ENCODE measurements at regions of chr2 and their contacts with region 1.

Region 1: GRCh38 chr2:176638167-176639015 is 369.1 kb downstream of the MTX2 start:
- DNase-seq: peak; percentile 15
- ATAC-seq: peak; percentile 97
- H3K4me3 ChIP-seq: peak overlapping the region; percentile 39 to 68 (median 50)
- H3K27ac ChIP-seq: no peak overlapping the region
- H3K4me1 ChIP-seq: peaks cover 11% of the 10 kb centered on the region; the same call in 1 of the 2 replicates
- H3K27me3 ChIP-seq: peaks cover 6 to 59% of the 10 kb centered on the region in 2 experiments
- CTCF ChIP-seq: peak; percentile 75
- EP300 ChIP-seq: no peak
- POLR2A ChIP-seq: no peak
- RAD21 ChIP-seq: peak; percentile 84

Region 2: DNA sequence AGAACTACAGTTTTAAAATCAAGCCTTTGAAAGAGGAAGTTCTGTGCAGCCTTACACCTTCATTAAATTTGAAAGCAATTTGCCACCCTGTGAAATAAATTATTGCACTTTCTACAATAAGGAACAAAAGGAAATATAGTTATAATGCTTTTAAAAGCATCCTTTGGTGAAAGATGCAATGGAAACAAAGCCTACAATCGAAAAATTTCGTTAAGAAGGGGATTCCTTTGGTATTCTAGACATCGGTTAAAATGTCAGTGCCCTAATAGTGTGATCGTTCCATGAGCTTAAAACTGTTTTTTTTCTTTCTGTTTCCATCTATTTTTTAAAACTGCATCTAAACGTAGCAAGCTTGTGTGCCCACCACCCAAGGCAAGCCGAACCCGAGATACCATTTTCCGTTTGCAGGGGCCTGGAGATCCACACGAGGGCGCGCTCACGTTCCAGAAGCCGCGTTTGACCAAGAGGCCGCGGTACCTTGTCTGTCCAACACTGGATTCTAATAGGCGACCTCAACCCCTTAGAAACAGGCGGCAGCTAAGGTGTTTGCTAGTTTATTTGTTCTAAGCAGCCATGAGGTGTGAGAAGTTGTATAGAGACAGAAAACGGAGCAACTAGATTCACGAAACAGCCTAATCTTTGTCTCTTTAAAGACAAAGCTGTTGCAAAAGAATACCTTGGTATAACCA is 527.3 kb before region 1 on chr2:
- CTCF ChIA-PET with region 1: no interaction called
- POLR2A ChIA-PET with region 1: no interaction called
- in situ Hi-C with region 1: no loop called
- intact Hi-C with region 1: loop called (anchors 5 kb)
- DNase-seq: peak; percentile 50
- ATAC-seq: peak; percentile 62
- H3K4me3 ChIP-seq: no peak overlapping the region
- H3K27ac ChIP-seq: no peak overlapping the region
- H3K4me1 ChIP-seq: peaks cover 14% of the 10 kb centered on the region
- H3K27me3 ChIP-seq: peaks cover 16 to 88% of the 10 kb centered on the region in 2 experiments; a peak in 4 of 5 replicates
- CTCF ChIP-seq: peak; percentile 87
- EP300 ChIP-seq: no peak
- POLR2A ChIP-seq: no peak
- RAD21 ChIP-seq: peak; percentile 32; the same call in 1 of the 2 replicates

Region 3: DNA sequence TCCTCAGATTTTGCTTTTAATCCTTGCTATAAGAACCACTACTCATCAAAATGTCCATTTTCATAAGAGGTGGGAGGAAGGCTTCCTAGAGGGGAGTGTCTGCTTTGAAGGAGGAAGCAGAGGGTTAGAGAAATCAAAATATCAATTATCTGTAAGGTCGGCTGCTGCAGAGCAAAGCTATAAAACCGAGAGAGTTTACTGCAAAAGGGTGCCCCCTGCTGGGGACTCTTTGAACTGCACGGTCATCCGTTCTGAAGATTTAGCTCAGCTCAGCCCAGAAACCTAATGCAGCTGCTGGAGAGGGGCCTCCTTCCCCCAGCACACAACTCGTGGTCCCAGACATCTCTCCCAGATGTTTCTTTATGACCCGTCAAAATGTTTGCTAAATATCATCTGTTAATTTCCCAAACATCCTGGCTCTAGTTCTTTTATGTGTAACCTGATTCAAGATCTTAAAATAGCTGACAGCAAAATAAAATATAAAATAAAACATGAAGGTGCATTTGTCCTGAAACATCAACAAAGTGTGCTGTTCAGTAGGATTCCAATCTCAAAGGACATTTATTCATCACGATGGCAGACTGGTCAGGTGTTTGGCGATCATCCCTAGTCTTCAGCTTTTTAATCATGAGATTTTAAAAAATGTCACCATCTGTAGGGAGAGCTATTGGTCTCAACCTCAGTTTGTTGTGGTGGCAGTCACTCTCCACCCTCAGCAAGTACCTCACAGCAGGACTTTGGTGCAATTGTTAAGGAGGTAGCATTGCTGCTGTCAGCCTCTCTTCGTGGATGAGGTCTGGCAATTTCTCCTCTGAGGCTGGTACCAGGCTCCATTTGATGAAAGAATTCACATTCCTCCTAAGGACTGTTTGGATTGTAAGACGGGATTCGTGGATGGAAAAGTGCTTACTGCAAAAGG is 183.2 kb before region 1 on chr2:
- CTCF ChIA-PET with region 1: no interaction called
- POLR2A ChIA-PET with region 1: no interaction called
- in situ Hi-C with region 1: loop called (anchors 10 kb)
- intact Hi-C with region 1: loop called (anchors 2 kb)
- DNase-seq: peak; percentile 58
- ATAC-seq: peak; percentile 83
- H3K4me3 ChIP-seq: no peak overlapping the region
- H3K27ac ChIP-seq: no peak overlapping the region
- H3K4me1 ChIP-seq: no peaks in the 10 kb centered on the region
- H3K27me3 ChIP-seq: peaks cover 2 to 4% of the 10 kb centered on the region in 2 experiments; a peak in 1 of 5 replicates
- CTCF ChIP-seq: peak; percentile 83
- EP300 ChIP-seq: no peak
- POLR2A ChIP-seq: no peak
- RAD21 ChIP-seq: peak; percentile 82

Measured in HepG2 (cell line).